ENCODE measurements at regions of chr5 and their contacts with region 1.

Region 1: DNA sequence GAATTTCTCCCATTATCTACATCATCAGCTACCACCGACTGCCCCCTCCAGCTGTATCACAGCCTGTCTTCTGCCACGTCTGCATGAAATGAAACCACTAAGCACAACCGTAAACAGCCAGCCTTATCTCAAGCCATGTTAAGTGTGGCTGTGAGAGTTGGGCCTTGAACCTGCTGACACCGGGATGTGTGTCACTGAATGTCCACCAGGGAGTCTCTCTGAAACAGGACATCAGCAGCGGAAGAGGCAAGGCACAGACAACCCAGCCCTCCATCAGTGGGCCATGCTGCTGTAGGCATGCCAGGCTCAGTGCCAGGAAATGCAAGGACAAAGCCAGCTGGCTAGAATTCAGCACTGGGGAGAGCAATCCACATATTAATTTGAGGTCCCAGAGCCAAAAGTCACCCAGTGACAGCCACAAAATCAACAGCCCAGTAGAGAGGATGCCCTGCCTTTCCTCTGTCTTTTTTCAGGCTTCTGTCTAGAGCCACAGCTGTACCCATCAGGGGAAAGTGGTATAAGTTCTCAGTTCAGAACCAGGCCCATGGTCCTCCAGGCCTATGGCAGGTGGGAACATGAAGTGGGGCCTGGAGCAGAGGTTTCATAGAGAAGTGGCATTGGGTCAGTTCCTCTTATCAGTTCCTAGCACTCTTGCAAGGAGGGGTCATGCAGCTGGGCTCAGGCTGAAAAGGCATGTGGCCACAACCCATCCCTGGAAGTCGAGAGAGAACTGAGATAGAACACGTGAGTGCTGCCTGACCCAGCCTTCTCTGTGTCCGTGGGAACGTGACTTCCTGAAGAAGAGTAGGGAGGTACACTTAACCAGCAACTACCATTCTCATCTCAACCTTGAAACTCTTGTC is 199.4 kb downstream of the ESM1 start:
- DNase-seq: peak in 4 of 35 experiments; percentile 1 to 37 (median 3)
- ATAC-seq: no peak
- H3K4me3 ChIP-seq: no peak overlapping the region
- H3K4me3 Mint-ChIP-seq: no peak overlapping the region
- H3K27ac ChIP-seq: no peak overlapping the region
- H3K27ac Mint-ChIP-seq: peak overlapping the region in 1 of 2 donors; percentile 0
- H3K4me1 ChIP-seq: no peaks in the 10 kb centered on the region
- H3K4me1 Mint-ChIP-seq: peaks cover 0 to 4% (median 0%) of the 10 kb centered on the region in 3 donors
- H3K27me3 ChIP-seq: no peaks in the 10 kb centered on the region
- H3K27me3 Mint-ChIP-seq: no peaks in the 10 kb centered on the region

Region 2: GRCh38 chr5:54567996-54568395 is 218.0 kb before region 1 on chr5:
- CTCF ChIA-PET with region 1: no interaction called
- POLR2A ChIA-PET with region 1: interaction called in 1 of 2 experiments, 14 read pairs
- DNase-seq: no peak
- ATAC-seq: no peak
- H3K4me3 ChIP-seq: no peak overlapping the region
- H3K4me3 Mint-ChIP-seq: no peak overlapping the region
- H3K27ac ChIP-seq: no peak overlapping the region
- H3K27ac Mint-ChIP-seq: no peak overlapping the region
- H3K4me1 ChIP-seq: no peaks in the 10 kb centered on the region
- H3K4me1 Mint-ChIP-seq: no peaks in the 10 kb centered on the region
- H3K27me3 ChIP-seq: no peaks in the 10 kb centered on the region
- H3K27me3 Mint-ChIP-seq: no peaks in the 10 kb centered on the region

Region 3: GRCh38 chr5:54580997-54581811 is 204.8 kb before region 1 on chr5:
- CTCF ChIA-PET with region 1: no interaction called
- POLR2A ChIA-PET with region 1: no interaction called
- DNase-seq: no peak
- ATAC-seq: no peak
- H3K4me3 ChIP-seq: no peak overlapping the region
- H3K4me3 Mint-ChIP-seq: no peak overlapping the region
- H3K27ac ChIP-seq: no peak overlapping the region
- H3K27ac Mint-ChIP-seq: no peak overlapping the region
- H3K4me1 ChIP-seq: peaks cover 0 to 3% of the 10 kb centered on the region in 2 experiments
- H3K4me1 Mint-ChIP-seq: peaks cover 4 to 17% (median 5%) of the 10 kb centered on the region in 3 donors
- H3K27me3 ChIP-seq: peaks cover 0 to 3% of the 10 kb centered on the region in 2 experiments
- H3K27me3 Mint-ChIP-seq: no peaks in the 10 kb centered on the region

Measured in T-cell (primary cell).